GM18951 (cell line): ENCODE measurements at regions of chr7 and their contacts with region 1.

Region 1: DNA sequence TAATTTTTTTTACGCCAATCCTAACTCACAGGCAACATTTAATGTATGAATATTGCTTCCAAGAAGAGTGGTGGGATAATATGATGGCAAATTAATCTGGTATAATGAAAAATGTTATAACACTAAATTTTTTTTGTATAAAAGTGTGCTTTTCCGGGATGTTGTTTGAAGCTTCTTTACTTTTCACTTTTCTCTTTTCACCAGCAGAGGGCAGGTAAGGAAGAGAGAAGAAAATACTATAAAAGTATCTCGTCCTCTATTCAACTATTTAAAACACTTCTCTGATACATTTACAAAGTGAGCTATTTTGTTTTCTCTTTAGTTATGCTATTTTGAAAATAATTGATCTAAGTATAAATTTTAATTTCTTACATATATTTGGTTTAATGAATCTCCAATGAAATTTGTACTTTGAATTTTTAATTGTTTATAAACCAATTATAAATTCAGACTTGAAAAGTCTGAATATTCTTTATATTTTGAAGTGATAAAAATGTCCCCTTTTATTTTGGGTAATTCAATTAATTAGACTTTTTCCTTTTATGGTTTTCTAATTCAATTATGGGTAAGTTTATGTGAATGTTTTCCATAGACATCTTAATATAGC is 20.7 kb upstream of the CFTR start:
- POLR2A ChIP-seq: no peak

Region 2: GRCh38 chr7:118104812-118105441 is 645.8 kb after region 1 on chr7:
- in situ Hi-C with region 1: loop called (anchors 25 kb)
- POLR2A ChIP-seq: no peak